Activated CD4-positive, alpha-beta memory T cell treated with anti-CD3 and anti-CD28 coated beads for 36 hours (primary cell): ENCODE measurements at regions of chr19 and their contacts with region 1.

Region 1: DNA sequence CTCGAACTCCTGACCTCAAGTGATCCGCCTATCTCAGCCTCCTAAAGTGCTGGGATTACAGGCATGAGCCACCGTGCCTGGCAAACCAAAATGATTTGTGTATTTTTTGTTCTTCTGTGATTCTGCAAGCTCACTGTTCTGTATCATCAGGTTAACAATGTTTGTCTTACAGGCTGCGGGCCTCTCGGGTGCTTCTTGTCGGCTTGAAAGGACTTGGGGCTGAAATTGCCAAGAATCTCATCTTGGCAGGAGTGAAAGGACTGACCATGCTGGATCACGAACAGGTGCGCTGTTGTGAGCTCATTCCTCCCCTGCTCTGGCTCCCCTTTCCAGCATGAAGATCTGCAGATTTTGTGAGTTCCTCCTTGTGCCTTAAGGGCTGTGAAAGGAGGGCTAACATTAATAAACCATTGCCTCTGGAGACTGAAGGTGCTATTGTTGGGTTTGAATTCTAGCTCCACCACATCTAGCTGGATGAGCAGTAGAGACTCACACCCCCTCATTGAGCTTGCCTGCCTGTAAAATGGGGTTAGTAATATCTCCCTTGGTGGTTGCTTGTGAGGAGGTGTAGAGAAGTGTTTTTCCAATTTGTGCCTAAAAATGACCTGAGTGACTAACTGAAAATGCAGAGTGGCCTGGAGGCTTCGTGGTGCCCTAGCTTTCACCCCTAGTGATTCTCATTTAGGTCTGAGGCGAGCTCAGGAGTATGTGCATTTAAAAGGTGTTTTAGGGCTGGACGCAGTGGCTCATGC is 12.9 kb downstream of the SAE1 start:
- DNase-seq: peak; percentile 31
- H3K4me3 Mint-ChIP-seq: no peak overlapping the region
- H3K27ac Mint-ChIP-seq: peak overlapping the region; percentile 36
- H3K4me1 Mint-ChIP-seq: peaks cover 68% of the 10 kb centered on the region
- H3K27me3 Mint-ChIP-seq: no peaks in the 10 kb centered on the region

Region 2: DNA sequence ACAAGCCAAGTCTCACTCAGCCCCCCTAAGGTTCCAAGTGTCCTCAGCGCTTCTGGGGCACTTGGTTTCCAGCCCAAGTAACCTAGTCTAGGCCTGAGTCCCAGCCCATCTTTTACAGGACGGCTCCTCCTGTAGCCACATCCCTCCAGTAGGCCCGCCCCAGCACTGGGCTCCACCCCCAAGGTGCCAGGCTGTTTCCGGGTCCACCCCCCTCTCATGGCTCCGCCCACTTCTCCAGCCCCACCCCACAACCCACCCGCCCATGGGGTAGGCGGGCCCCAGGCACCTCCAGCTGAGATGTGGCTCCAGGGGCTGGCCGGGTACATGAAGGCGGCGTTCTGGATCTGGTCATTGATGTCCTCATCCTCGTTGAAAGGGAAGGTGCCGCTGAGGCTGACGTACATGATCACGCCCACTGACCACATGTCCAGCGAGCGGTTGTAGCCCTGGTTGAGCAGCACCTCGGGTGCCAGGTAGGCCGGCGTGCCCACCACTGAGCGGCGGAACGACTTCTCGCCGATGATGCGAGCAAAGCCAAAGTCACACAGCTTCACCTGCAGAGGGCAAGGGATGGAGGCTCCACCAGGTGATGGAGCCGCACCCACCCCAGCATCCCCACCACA is 465.3 kb before region 1 on chr19:
- CTCF ChIA-PET with region 1: no interaction called
- POLR2A ChIA-PET with region 1: no interaction called
- intact Hi-C with region 1: no loop called
- DNase-seq: peak; percentile 78
- H3K4me3 Mint-ChIP-seq: no peak overlapping the region
- H3K27ac Mint-ChIP-seq: peak overlapping the region; percentile 62
- H3K4me1 Mint-ChIP-seq: peaks cover 9% of the 10 kb centered on the region
- H3K27me3 Mint-ChIP-seq: no peaks in the 10 kb centered on the region

Region 3: GRCh38 chr19:46913852-46914430 is 229.6 kb before region 1 on chr19:
- CTCF ChIA-PET with region 1: no interaction called
- POLR2A ChIA-PET with region 1: no interaction called
- intact Hi-C with region 1: no loop called
- DNase-seq: no peak
- H3K4me3 Mint-ChIP-seq: no peak overlapping the region
- H3K27ac Mint-ChIP-seq: no peak overlapping the region
- H3K4me1 Mint-ChIP-seq: peaks cover 61% of the 10 kb centered on the region
- H3K27me3 Mint-ChIP-seq: no peaks in the 10 kb centered on the region

Region 4: DNA sequence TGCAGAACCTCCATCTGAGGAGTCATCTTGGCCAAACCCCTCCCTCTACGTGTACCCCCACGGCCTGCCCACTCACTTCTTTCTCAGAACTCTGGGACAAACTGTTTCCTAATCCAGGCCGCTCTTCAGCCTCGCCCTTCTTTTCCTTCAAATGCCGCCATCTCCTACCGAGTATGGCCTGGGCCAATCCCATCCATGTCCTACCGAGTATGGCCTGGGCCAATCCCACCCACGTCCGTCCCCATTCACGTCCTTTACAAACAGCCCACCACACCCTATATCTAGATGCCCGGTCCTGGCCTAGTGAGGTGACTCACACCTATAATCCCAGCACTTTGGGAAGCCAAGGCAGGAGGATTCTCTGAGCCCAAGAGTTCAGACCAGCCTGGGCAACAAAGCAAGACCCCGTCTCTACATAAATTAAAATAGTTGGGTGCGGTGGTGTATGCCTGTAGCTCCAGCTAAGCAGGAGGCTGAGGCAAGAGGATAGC is 96.2 kb before region 1 on chr19:
- CTCF ChIA-PET with region 1: no interaction called
- POLR2A ChIA-PET with region 1: no interaction called
- intact Hi-C with region 1: no loop called
- DNase-seq: no peak
- H3K4me3 Mint-ChIP-seq: peak overlapping the region; percentile 99
- H3K27ac Mint-ChIP-seq: peak overlapping the region; percentile 87
- H3K4me1 Mint-ChIP-seq: peaks cover 12% of the 10 kb centered on the region
- H3K27me3 Mint-ChIP-seq: peaks cover 1% of the 10 kb centered on the region

Region 5: GRCh38 chr19:47130591-47131227 is 12.8 kb before region 1 on chr19 and contains the start of gene SAE1:
- CTCF ChIA-PET with region 1: interaction called, 14 read pairs
- POLR2A ChIA-PET with region 1: interaction called, 5 read pairs
- intact Hi-C with region 1: no loop called
- DNase-seq: peak; percentile 97
- H3K4me3 Mint-ChIP-seq: peak within 1 kb of the TSS; percentile 99
- H3K27ac Mint-ChIP-seq: peak within 1 kb of the TSS; percentile 94
- H3K4me1 Mint-ChIP-seq: peaks cover 47% of the 10 kb centered on the region
- H3K27me3 Mint-ChIP-seq: peaks cover 4% of the 10 kb centered on the region
- total RNA-seq, gene SAE1: 154 to 157 TPM

Region 6: GRCh38 chr19:47168065-47168464 is 24.6 kb after region 1 on chr19:
- CTCF ChIA-PET with region 1: no interaction called
- POLR2A ChIA-PET with region 1: no interaction called
- intact Hi-C with region 1: no loop called
- DNase-seq: no peak
- H3K4me3 Mint-ChIP-seq: no peak overlapping the region
- H3K27ac Mint-ChIP-seq: no peak overlapping the region
- H3K4me1 Mint-ChIP-seq: peaks cover 6% of the 10 kb centered on the region
- H3K27me3 Mint-ChIP-seq: no peaks in the 10 kb centered on the region